ENCODE measurements at regions of chr4 and their contacts with region 1.

Region 1: DNA sequence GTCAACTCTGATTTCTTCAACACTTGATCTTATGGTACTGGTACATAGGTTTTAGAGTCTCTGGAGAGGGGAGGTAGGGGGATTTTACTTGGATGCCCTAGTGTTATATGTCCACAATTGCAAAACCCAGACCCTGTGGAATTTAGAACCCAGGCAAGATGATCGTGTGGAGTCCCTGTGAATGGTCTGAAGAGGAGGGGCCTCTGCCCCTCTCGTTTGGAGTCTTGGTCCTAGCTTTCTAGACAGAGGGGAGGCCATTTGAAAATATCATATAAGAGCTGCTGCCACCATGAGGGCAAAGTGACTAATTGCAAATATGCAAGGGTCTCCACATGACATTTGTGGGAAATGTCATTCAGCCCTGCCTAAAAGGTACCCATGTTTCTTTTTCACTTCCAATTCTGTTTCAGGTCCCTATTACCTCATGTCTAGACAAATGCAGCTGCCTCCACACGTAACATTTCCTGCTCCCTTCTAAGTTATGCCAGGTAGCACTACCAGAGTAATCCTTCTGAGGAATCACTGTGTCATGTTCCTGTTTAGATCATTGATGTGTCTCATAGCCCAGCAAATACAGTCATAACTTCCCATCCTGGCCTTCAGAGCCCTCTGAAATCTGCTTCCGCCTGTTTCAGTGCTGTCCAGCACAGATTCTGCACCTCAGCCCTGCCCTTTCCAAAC is 126.8 kb downstream of the KLHL8 start:
- DNase-seq: peak; percentile 60
- ATAC-seq: peak; percentile 79
- H3K4me3 Mint-ChIP-seq: no peak overlapping the region
- H3K27ac Mint-ChIP-seq: peak overlapping the region; percentile 78
- H3K4me1 Mint-ChIP-seq: peaks cover 52% of the 10 kb centered on the region
- H3K27me3 Mint-ChIP-seq: no peaks in the 10 kb centered on the region

Region 2: GRCh38 chr4:87073199-87074120 is 20.1 kb before region 1 on chr4:
- CTCF ChIA-PET with region 1: interaction called, 5 read pairs
- POLR2A ChIA-PET with region 1: no interaction called
- intact Hi-C with region 1: loop called in 1 of 2 experiments (anchors 1 kb)
- DNase-seq: peak; percentile 87
- ATAC-seq: peak; percentile 96
- H3K4me3 Mint-ChIP-seq: peak overlapping the region; percentile 63
- H3K27ac Mint-ChIP-seq: peak overlapping the region; percentile 91
- H3K4me1 Mint-ChIP-seq: peaks cover 51% of the 10 kb centered on the region
- H3K27me3 Mint-ChIP-seq: no peaks in the 10 kb centered on the region

Region 3: GRCh38 chr4:87078987-87079486 is 14.5 kb before region 1 on chr4:
- CTCF ChIA-PET with region 1: interaction called, 13 read pairs
- POLR2A ChIA-PET with region 1: no interaction called
- intact Hi-C with region 1: loop called in 1 of 2 experiments (anchors 1 kb)
- DNase-seq: no peak
- ATAC-seq: no peak
- H3K4me3 Mint-ChIP-seq: no peak overlapping the region
- H3K27ac Mint-ChIP-seq: no peak overlapping the region
- H3K4me1 Mint-ChIP-seq: peaks cover 40% of the 10 kb centered on the region
- H3K27me3 Mint-ChIP-seq: no peaks in the 10 kb centered on the region